ENCODE measurements at regions of chr1 and their contacts with region 1.

Region 1: DNA sequence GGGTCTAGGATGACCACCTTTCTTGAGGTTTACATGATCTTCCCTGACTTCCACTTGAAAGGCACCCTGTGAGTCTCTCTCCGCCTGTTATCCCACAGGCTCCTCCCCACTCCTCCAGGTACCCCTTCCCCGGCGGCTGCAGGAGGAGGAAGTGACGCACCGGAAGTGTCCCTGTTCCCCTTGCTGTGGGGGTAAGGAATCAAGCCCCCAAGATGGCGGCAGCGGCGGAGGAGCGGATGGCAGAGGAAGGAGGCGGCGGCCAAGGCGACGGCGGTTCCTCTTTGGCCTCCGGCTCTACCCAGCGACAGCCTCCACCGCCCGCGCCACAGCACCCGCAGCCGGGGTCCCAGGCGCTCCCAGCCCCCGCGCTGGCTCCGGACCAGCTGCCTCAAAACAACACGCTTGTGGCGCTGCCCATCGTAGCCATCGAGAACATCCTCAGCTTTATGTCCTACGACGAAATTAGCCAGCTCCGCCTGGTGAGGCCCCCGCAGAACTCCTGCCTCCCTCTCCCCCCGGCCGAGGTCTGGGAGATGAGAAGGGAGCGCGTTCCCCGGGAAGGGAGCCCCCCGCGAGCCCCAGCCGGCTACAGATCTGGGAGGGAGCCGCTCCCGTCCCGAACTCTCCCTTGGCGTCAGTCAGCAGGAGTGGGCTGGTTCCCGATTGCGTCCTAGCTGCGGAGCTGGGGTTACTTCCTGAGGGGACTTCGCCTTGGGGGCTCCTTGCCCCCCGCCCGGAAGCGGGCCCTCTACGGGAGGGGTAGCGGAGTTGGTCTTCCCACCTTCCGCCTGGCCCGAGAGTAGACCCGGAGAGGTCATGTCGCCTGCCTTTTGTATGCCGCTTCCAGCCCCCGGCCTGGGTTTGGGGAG is at the start of gene FBXO28:
- DNase-seq: peak; percentile 97
- ATAC-seq: peak; percentile 100
- H3K4me3 ChIP-seq: peak within 1 kb of the TSS; percentile 84
- H3K27ac ChIP-seq: peak within 1 kb of the TSS; percentile 95
- H3K4me1 ChIP-seq: peaks cover 16% of the 10 kb centered on the region
- H3K27me3 ChIP-seq: peaks cover 5% of the 10 kb centered on the region
- CTCF ChIP-seq: no peak
- total RNA-seq, gene FBXO28: 24.9 TPM

Region 2: DNA sequence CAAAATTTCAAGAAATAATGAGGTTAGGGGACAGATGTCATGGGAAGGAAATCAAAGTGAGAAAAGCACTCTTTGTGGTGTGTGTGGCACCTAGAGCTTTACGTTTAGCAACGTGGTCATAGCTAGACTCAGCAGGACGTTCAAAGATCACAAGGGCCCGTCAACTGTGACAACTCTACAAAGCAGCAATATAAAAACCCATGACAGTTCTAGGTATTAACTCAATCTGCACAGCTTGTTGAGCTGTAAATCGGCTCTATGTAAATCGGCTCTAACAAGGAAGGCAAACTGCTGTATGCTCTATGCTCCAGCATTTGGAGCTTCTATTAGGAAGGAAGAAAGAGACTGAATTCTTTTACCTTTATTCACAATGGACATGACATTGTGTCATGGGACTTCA is 333.2 kb before region 1 on chr1:
- intact Hi-C with region 1: no loop called
- DNase-seq: no peak
- ATAC-seq: no peak
- H3K4me3 ChIP-seq: no peak overlapping the region
- H3K27ac ChIP-seq: no peak overlapping the region
- H3K4me1 ChIP-seq: peaks cover 3% of the 10 kb centered on the region
- H3K27me3 ChIP-seq: no peaks in the 10 kb centered on the region
- CTCF ChIP-seq: no peak

Region 3: GRCh38 chr1:223878598-223879325 is 235.4 kb before region 1 on chr1:
- intact Hi-C with region 1: no loop called
- DNase-seq: no peak
- ATAC-seq: no peak
- H3K4me3 ChIP-seq: no peak overlapping the region
- H3K27ac ChIP-seq: no peak overlapping the region
- H3K4me1 ChIP-seq: no peaks in the 10 kb centered on the region
- H3K27me3 ChIP-seq: no peaks in the 10 kb centered on the region
- CTCF ChIP-seq: no peak

Region 4: GRCh38 chr1:224329842-224330753 is 215.9 kb after region 1 on chr1 and contains the start of gene NVL:
- intact Hi-C with region 1: loop called (anchors 10 kb)
- DNase-seq: peak; percentile 92
- ATAC-seq: peak; percentile 96
- H3K4me3 ChIP-seq: peak within 1 kb of the TSS; percentile 74
- H3K27ac ChIP-seq: peak within 1 kb of the TSS; percentile 96
- H3K4me1 ChIP-seq: peaks cover 22% of the 10 kb centered on the region
- H3K27me3 ChIP-seq: no peaks in the 10 kb centered on the region
- CTCF ChIP-seq: no peak
- total RNA-seq, gene NVL: 24.1 TPM

Measured in upper lobe of right lung (tissue), 1 donor.